ENCODE measurements at regions of chr1 and their contacts with region 1.

Region 1: GRCh38 chr1:3727042-3727824 is 25.0 kb upstream of the CCDC27 start:
- DNase-seq: no peak
- H3K4me3 ChIP-seq: no peak overlapping the region
- H3K27ac ChIP-seq: no peak overlapping the region
- H3K4me1 ChIP-seq: no peaks in the 10 kb centered on the region
- H3K27me3 ChIP-seq: no peaks in the 10 kb centered on the region
- CTCF ChIP-seq: no peak

Region 2: DNA sequence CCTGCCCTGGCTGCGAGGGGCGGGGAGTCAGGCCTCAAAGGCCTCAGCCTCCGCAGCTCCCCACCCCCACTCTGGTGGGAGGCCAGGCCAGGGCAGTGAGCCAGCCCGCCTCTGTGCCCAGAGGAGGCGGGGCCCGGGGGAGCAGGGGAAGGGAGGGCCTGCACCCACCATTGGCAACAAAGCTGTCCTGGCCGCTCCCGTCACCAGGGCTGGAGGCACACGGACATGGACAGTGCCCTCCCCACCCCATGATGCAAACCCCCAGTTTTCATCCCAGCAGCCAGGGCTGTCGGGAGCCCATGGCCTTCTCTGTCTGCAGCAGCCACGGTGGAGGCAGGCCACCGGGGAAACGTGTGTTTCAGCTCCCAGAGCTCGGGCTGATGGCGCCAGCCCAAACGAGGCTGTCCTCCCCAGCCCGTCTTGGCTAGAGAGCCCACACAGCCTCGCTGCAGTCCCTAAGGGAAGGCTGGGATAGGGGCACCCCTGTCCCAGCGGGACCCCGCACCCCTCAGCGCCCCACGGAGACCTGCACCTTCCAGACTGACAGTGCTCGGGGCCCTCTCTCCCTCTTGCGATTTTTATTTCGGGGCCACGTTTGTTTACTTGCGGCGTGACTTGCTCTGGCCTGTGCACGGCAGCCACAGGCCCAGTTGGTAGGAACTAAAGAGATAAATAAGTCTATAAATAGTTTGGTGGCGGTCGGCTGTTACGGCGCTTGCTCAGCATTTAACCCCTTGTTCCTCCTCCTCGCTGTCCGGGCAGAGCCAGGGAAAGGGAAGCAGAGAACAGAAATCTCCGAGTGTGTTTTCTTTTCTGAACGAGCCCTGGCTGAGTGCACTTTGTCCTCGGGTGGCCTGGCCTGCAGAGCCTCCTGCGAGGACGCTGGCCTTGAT is 556.4 kb before region 1 on chr1:
- CTCF ChIA-PET with region 1: no interaction called
- dilution Hi-C with region 1: no loop called
- in situ Hi-C with region 1: no loop called
- intact Hi-C with region 1: no loop called
- DNase-seq: no peak
- H3K4me3 ChIP-seq: no peak overlapping the region
- H3K27ac ChIP-seq: no peak overlapping the region
- H3K4me1 ChIP-seq: no peaks in the 10 kb centered on the region
- H3K27me3 ChIP-seq: no peaks in the 10 kb centered on the region
- CTCF ChIP-seq: no peak

Region 3: DNA sequence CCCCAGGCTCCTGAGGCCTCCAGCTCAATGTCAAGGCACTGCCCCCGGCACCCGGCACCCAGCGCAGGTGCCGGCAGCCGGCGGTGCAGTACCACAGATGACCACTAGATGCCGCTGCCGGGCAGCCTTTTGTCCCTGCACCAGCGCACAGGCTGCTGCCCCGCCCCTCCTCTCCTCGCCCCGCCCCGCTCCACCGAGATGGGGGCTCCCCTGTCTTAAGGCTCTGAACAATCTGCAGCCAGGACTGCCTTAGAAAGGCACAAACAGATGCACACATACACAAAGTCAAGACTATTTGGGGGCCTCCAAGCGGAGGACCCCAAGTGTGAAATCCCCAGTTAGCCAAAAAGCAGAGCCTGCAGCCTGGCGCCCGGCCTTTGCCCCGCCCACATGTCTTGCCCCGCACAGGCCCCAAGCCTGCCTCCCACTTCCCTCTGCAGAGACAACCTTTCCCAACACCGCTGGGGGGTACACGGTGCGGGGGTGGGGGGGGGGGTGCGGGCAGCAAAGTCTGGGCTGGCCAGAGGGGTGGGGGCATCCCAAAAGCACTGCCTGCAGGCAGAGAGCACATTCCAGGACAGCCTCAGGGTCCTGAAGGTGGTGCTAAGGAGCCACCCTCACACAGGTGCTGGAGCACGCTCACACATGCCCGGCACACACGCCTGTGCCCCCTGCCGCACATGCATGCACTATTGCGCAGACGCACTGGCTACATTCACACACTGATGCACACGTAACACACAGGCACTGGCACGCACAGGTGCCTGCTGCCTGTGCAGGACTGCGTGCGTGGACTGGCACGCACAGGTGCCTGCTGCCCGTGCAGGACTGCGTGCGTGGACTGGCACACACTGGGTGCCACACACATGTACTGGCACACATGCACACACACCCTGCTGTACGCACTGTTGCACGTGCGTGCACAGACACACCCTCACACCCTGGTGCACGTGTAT is 235.7 kb before region 1 on chr1:
- CTCF ChIA-PET with region 1: no interaction called
- dilution Hi-C with region 1: no loop called
- in situ Hi-C with region 1: no loop called
- intact Hi-C with region 1: loop called (anchors 1 kb)
- DNase-seq: peak; percentile 35
- H3K4me3 ChIP-seq: no peak overlapping the region
- H3K27ac ChIP-seq: no peak overlapping the region
- H3K4me1 ChIP-seq: peaks cover 8% of the 10 kb centered on the region
- H3K27me3 ChIP-seq: no peaks in the 10 kb centered on the region
- CTCF ChIP-seq: peak; percentile 65 to 93

Region 4: DNA sequence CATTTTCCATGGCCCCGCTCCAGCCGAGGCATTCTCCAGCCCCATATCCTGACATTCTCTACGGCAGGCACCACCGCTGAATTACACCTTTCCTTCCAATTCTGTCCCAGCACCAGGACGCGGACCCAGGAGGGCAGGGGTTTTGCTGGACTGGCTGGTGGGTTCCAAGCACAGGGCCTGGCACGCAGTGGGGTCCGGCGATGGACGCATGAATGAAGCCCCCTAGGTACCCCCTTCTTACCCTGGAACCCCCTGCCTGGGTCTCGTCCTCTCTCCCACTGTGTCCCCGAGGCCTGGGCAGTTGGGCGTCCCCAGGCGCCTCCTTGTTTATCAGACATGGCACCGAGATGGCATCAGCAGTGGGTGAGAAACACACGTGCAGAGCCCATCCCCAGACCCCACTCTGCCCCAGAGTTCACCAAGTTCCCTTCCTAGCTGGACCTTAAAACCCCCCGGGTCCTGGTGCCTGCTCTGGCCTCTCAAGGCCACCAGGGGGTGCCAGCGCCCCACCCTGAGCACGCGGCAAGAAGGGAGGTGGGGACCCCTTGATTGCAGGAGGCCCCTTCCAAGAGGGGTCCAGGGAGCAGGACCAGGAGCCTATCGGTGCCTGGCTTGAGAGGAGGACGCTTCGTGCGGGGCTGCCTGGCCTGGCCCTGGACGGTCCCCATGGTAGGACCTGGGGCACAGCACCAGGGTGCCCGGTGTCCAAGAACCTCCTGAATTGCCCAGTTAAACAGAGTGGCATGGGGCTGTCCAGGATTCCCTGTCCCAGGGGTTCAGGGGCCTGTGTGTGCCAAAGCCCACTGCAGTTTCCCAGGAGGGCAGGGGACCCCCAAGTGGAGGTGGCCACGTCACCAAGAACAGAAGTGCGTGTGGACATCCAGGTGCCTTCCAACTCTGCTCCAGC is 162.1 kb before region 1 on chr1:
- CTCF ChIA-PET with region 1: interaction called, 3 read pairs
- dilution Hi-C with region 1: no loop called
- in situ Hi-C with region 1: no loop called
- intact Hi-C with region 1: loop called (anchors 1 kb)
- DNase-seq: no peak
- H3K4me3 ChIP-seq: no peak overlapping the region
- H3K27ac ChIP-seq: no peak overlapping the region
- H3K4me1 ChIP-seq: no peaks in the 10 kb centered on the region
- H3K27me3 ChIP-seq: no peaks in the 10 kb centered on the region
- CTCF ChIP-seq: peak; percentile 85 to 93

Region 5: GRCh38 chr1:3624200-3625136 is 102.8 kb before region 1 on chr1 and contains the start of gene TPRG1L:
- CTCF ChIA-PET with region 1: interaction called, 3 read pairs
- dilution Hi-C with region 1: no loop called
- in situ Hi-C with region 1: no loop called
- intact Hi-C with region 1: loop called (anchors 1 kb)
- DNase-seq: peak; percentile 94
- H3K4me3 ChIP-seq: peak within 1 kb of the TSS; percentile 75 to 100 (median 77)
- H3K27ac ChIP-seq: no peak within 1 kb of the TSS
- H3K4me1 ChIP-seq: peaks cover 18% of the 10 kb centered on the region
- H3K27me3 ChIP-seq: no peaks in the 10 kb centered on the region
- CTCF ChIP-seq: no peak
- total RNA-seq, gene TPRG1L: 44.2 to 48.6 TPM

Region 6: DNA sequence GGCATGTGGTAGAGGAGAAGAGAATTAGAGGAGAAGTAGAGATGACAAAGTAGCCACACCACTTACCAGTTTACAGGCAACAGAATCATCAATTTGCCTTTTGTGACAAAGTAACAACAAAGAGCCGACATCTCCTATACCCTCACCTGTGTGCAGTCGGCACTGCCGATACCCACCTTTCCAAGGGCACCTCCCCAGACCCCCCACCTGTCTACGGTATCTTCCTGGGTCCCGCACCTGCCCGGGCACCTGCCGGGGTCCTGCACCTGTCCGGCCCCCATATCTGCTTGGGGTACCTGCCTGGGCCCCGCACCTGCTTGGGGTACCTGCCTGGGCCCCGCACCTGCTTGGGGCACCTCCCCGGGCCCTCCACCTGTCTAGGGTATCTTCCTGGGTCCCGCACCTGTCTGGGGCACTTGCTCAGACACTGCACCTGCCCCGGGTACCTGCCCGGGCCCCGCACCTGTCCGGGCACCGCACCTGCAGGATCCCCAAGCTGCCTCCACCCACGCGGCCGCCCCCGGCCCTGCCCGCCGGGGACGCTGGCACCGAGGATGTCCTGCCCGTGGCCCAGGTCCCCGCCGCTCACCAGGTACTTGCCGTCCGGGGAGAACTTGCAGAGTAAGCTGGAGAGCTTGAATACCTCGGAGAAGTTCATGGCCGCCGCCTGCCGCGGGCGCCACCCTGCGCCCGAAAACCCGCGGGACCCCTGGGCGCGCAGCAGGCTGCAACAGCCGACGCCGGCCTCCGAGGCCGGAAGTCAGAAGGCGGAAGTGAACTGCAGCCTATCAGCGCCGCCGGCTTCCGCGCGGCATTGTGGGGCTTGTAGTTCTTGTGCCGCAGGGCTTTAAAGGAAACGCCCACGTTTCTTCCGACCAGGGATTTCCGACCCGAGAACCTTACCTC is 77.6 kb before region 1 on chr1 and contains the start of gene WRAP73:
- CTCF ChIA-PET with region 1: interaction called, 8 read pairs
- dilution Hi-C with region 1: no loop called
- in situ Hi-C with region 1: no loop called
- intact Hi-C with region 1: loop called (anchors 1 kb)
- DNase-seq: peak; percentile 85
- H3K4me3 ChIP-seq: peak within 1 kb of the TSS; percentile 67 to 89 (median 67)
- H3K27ac ChIP-seq: no peak within 1 kb of the TSS
- H3K4me1 ChIP-seq: peaks cover 15% of the 10 kb centered on the region
- H3K27me3 ChIP-seq: peaks cover 27% of the 10 kb centered on the region
- CTCF ChIP-seq: peak; percentile 2 to 20
- total RNA-seq, gene WRAP73: 8.3 to 26.6 TPM

Region 7: GRCh38 chr1:3695326-3696217 is 31.7 kb before region 1 on chr1:
- CTCF ChIA-PET with region 1: no interaction called
- dilution Hi-C with region 1: no loop called
- in situ Hi-C with region 1: no loop called
- intact Hi-C with region 1: loop called (anchors 1 kb)
- DNase-seq: no peak
- H3K4me3 ChIP-seq: no peak overlapping the region
- H3K27ac ChIP-seq: no peak overlapping the region
- H3K4me1 ChIP-seq: peaks cover 35% of the 10 kb centered on the region
- H3K27me3 ChIP-seq: no peaks in the 10 kb centered on the region
- CTCF ChIP-seq: peak; percentile 76 to 84